ENCODE measurements at regions of chr17 and their contacts with region 1.

Region 1: DNA sequence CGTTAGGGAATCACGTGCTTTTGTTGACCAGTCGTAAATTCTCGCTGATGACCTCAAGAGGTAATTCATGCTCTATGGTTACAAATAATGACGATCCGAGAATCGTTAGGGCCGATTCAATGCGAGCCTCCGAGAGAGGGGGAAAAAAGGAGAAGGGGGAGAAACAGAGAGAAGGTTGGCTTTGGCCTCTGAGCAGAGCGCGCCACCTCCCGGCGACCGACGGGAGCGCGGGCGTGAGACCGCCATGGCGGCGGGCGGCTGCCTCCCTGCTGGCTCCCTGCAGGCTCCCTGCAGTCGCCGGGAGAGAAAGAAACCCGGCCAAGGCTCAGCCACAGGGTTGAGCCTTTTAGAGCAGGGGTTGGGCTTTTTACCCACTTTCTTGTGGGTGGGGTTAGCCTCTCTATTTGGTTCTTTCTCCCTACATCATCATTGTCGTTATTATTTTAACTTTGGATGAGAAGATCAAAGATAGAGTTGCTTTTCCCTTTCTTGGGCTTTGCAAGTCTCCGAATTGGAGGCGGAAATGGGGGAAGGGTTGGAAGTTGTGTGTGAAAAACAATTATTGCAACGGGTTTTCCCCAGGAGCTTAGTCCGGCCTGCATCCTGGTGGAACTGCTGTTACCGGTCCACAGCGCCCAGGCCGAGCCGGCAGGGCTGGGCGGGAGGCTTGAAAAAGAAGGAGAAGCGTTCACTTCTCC is 410 bp upstream of the HOXB5 start:
- DNase-seq: peak; percentile 88
- ATAC-seq: peak; percentile 56
- H3K4me3 ChIP-seq: peak overlapping the region; percentile 4; the same call in 1 of the 2 replicates
- H3K27ac ChIP-seq: no peak overlapping the region
- H3K4me1 ChIP-seq: peaks cover 13% of the 10 kb centered on the region
- H3K27me3 ChIP-seq: no peaks in the 10 kb centered on the region
- CTCF ChIP-seq: peak; percentile 97

Region 2: GRCh38 chr17:48186812-48187211 is 407.2 kb before region 1 on chr17:
- CTCF ChIA-PET with region 1: interaction called, 10 read pairs
- POLR2A ChIA-PET with region 1: no interaction called
- intact Hi-C with region 1: no loop called
- DNase-seq: no peak
- ATAC-seq: no peak
- H3K4me3 ChIP-seq: no peak overlapping the region
- H3K27ac ChIP-seq: no peak overlapping the region
- H3K4me1 ChIP-seq: no peaks in the 10 kb centered on the region
- H3K27me3 ChIP-seq: peaks cover 10% of the 10 kb centered on the region; the same call in 1 of the 2 replicates
- CTCF ChIP-seq: no peak

Region 3: GRCh38 chr17:49031965-49032928 is 438.3 kb after region 1 on chr17:
- CTCF ChIA-PET with region 1: no interaction called
- POLR2A ChIA-PET with region 1: no interaction called
- intact Hi-C with region 1: no loop called
- DNase-seq: peak; percentile 94
- ATAC-seq: peak; percentile 87
- H3K4me3 ChIP-seq: peak overlapping the region; percentile 46; the same call in 1 of the 2 replicates
- H3K27ac ChIP-seq: no peak overlapping the region
- H3K4me1 ChIP-seq: peaks cover 7% of the 10 kb centered on the region
- H3K27me3 ChIP-seq: no peaks in the 10 kb centered on the region
- CTCF ChIP-seq: peak; percentile 88